ENCODE measurements at regions of chr2 and their contacts with region 1.

Region 1: DNA sequence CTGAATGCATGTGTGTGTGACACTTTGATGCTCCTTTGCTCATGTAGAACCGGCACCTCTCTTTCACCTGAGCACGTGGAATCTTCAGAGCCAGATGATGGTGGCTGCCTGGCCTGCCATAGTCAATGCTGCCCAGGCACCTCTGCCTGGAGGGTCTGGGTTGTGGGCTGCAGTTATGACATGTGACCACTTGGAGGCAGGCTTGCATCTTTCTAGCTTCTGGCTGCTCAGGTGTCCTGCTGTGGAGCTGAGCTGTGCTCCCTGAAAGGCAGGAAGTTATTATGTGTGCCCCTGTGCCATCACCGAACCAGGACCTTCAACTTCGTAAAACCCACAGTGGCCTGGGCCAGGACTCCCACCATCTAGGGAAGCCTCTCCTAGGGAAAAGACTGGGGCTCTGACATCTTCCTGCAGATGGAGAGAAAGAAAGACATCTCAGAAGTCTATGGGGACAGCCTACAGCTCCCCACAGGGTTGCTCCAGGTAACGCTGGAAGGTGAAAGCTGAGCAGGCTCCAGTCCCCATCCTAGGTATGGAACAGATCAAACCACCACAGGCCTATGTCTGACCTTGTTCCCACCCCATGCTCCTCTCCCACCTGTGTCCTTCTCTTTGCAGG is 30.2 kb downstream of the PSD4 start:
- DNase-seq: peak; percentile 66 to 88 (median 71)
- ATAC-seq: peak; percentile 96
- H3K4me3 ChIP-seq: no peak overlapping the region
- H3K4me3 Mint-ChIP-seq: no peak overlapping the region
- H3K27ac ChIP-seq: peak overlapping the region; percentile 17 to 40
- H3K27ac Mint-ChIP-seq: peak overlapping the region; percentile 83
- H3K4me1 ChIP-seq: peaks cover 21% of the 10 kb centered on the region
- H3K4me1 Mint-ChIP-seq: peaks cover 38% of the 10 kb centered on the region
- H3K27me3 ChIP-seq: no peaks in the 10 kb centered on the region
- H3K27me3 Mint-ChIP-seq: no peaks in the 10 kb centered on the region
- CTCF ChIP-seq: peak; percentile 85

Region 2: DNA sequence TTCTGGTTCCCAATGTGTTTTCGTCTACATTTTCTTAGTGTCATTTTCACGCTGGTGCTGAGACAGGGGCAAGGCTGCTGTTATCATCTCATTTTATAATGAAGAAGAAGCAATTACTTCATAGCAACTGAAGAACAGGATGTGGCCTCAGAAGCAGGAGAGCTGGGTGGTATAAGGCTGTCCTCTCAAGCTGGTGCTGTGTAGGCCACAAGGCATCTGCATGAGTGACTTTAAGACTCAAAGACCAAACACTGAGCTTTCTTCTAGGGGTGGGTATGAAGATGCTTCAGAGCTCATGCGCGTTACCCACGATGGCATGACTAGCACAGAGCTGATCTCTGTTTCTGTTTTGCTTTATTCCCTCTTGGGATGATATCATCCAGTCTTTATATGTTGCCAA is 218.9 kb before region 1 on chr2:
- CTCF ChIA-PET with region 1: no interaction called
- POLR2A ChIA-PET with region 1: no interaction called
- intact Hi-C with region 1: loop called in 1 of 2 experiments (anchors 5 kb)
- DNase-seq: peak in 12 of 14 experiments; percentile 3 to 56 (median 26)
- ATAC-seq: peak; percentile 94
- H3K4me3 ChIP-seq: no peak overlapping the region
- H3K4me3 Mint-ChIP-seq: peak overlapping the region; percentile 39
- H3K27ac ChIP-seq: peak overlapping the region in 1 of 2 donors; percentile 11
- H3K27ac Mint-ChIP-seq: peak overlapping the region; percentile 80
- H3K4me1 ChIP-seq: peaks cover 18% of the 10 kb centered on the region
- H3K4me1 Mint-ChIP-seq: peaks cover 30% of the 10 kb centered on the region
- H3K27me3 ChIP-seq: no peaks in the 10 kb centered on the region
- H3K27me3 Mint-ChIP-seq: no peaks in the 10 kb centered on the region
- CTCF ChIP-seq: peak; percentile 7

Region 3: GRCh38 chr2:113173542-113174395 is 30.2 kb before region 1 on chr2 and contains the start of gene PSD4:
- CTCF ChIA-PET with region 1: interaction called, 12 read pairs
- POLR2A ChIA-PET with region 1: interaction called, 38 read pairs
- intact Hi-C with region 1: no loop called
- DNase-seq: peak; percentile 72 to 95 (median 85)
- ATAC-seq: peak; percentile 82
- H3K4me3 ChIP-seq: peak within 1 kb of the TSS; percentile 86
- H3K4me3 Mint-ChIP-seq: peak within 1 kb of the TSS; percentile 92
- H3K27ac ChIP-seq: peak within 1 kb of the TSS; percentile 62 to 88
- H3K27ac Mint-ChIP-seq: peak within 1 kb of the TSS; percentile 93
- H3K4me1 ChIP-seq: peaks cover 99% of the 10 kb centered on the region
- H3K4me1 Mint-ChIP-seq: peaks cover 76% of the 10 kb centered on the region
- H3K27me3 ChIP-seq: no peaks in the 10 kb centered on the region
- H3K27me3 Mint-ChIP-seq: peaks cover 5% of the 10 kb centered on the region
- CTCF ChIP-seq: no peak
- total RNA-seq, gene PSD4: 96.5 to 101 TPM

Region 4: DNA sequence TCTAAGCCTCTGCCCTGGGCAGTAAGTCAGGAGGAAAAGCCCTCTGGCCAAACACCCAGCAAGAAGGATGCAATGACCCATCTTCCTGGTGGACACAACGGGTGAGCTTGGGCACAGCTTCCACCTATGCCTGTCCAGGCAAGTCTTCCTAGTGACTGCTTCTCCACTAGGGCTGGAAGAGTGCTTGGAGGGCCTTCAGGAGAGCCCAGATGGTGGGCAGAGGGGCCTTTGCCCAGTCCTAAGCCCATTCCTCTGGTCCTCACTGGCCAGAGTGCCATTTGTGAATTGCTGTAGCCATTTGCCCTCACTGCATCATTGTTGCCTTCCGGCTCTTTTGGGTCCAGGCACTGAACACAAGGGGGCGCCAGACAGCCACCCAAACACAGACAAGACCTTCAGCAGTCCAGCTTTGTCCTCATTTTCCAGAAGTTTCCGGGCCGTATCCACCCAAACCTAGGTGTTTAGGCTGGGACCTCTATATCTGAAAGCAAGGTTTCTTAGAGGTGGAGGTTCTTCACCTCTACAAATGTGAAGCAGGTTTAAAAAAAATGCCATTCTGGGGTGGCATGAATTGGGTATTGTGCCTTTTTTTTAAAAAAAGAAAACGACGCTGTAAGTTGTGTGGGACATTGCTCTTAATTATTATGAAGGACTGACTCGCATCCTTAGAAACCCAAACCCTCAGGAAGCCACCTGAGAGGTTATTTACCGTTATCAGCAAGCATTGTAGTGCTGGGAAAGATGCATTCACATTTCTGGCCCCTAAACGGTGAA is 45.2 kb after region 1 on chr2:
- CTCF ChIA-PET with region 1: interaction called, 7 read pairs
- POLR2A ChIA-PET with region 1: interaction called, 5 read pairs
- intact Hi-C with region 1: loop called in 1 of 2 experiments (anchors 2 kb)
- DNase-seq: peak; percentile 51 to 88 (median 68)
- ATAC-seq: peak; percentile 54
- H3K4me3 ChIP-seq: no peak overlapping the region
- H3K4me3 Mint-ChIP-seq: peak overlapping the region; percentile 17
- H3K27ac ChIP-seq: no peak overlapping the region
- H3K27ac Mint-ChIP-seq: peak overlapping the region; percentile 80
- H3K4me1 ChIP-seq: peaks cover 40% of the 10 kb centered on the region
- H3K4me1 Mint-ChIP-seq: peaks cover 53% of the 10 kb centered on the region
- H3K27me3 ChIP-seq: no peaks in the 10 kb centered on the region
- H3K27me3 Mint-ChIP-seq: no peaks in the 10 kb centered on the region
- CTCF ChIP-seq: peak; percentile 96

Region 5: GRCh38 chr2:113370478-113371091 is 166.6 kb after region 1 on chr2:
- CTCF ChIA-PET with region 1: interaction called, 7 read pairs
- POLR2A ChIA-PET with region 1: interaction called, 3 read pairs
- intact Hi-C with region 1: loop called (anchors 1 kb)
- DNase-seq: peak; percentile 49 to 85 (median 58)
- ATAC-seq: peak; percentile 100
- H3K4me3 ChIP-seq: no peak overlapping the region
- H3K4me3 Mint-ChIP-seq: no peak overlapping the region
- H3K27ac ChIP-seq: no peak overlapping the region
- H3K27ac Mint-ChIP-seq: no peak overlapping the region
- H3K4me1 ChIP-seq: no peaks in the 10 kb centered on the region
- H3K4me1 Mint-ChIP-seq: peaks cover 5% of the 10 kb centered on the region
- H3K27me3 ChIP-seq: no peaks in the 10 kb centered on the region
- H3K27me3 Mint-ChIP-seq: no peaks in the 10 kb centered on the region
- CTCF ChIP-seq: peak; percentile 65

Region 6: GRCh38 chr2:113390124-113390849 is 186.3 kb after region 1 on chr2:
- CTCF ChIA-PET with region 1: interaction called, 7 read pairs
- POLR2A ChIA-PET with region 1: no interaction called
- intact Hi-C with region 1: loop called (anchors 2 kb)
- DNase-seq: peak; percentile 11 to 88 (median 43)
- ATAC-seq: peak; percentile 97
- H3K4me3 ChIP-seq: peak overlapping the region; percentile 51
- H3K4me3 Mint-ChIP-seq: peak overlapping the region; percentile 83
- H3K27ac ChIP-seq: no peak overlapping the region
- H3K27ac Mint-ChIP-seq: peak overlapping the region; percentile 68
- H3K4me1 ChIP-seq: peaks cover 4% of the 10 kb centered on the region
- H3K4me1 Mint-ChIP-seq: peaks cover 10% of the 10 kb centered on the region
- H3K27me3 ChIP-seq: no peaks in the 10 kb centered on the region
- H3K27me3 Mint-ChIP-seq: no peaks in the 10 kb centered on the region
- CTCF ChIP-seq: peak; percentile 100